ENCODE measurements at regions of chr2 and their contacts with region 1.

Region 1: GRCh38 chr2:7773362-7774360 is 856.4 kb downstream of the RNF144A start:
- DNase-seq: peak; percentile 26
- H3K4me3 Mint-ChIP-seq: peak overlapping the region; percentile 31
- H3K27ac Mint-ChIP-seq: peak overlapping the region; percentile 91
- H3K4me1 Mint-ChIP-seq: peaks cover 58% of the 10 kb centered on the region
- H3K27me3 Mint-ChIP-seq: no peaks in the 10 kb centered on the region

Region 2: GRCh38 chr2:7450188-7450832 is 323.4 kb before region 1 on chr2:
- intact Hi-C with region 1: loop called (anchors 1 kb)
- DNase-seq: peak; percentile 59
- H3K4me3 Mint-ChIP-seq: peak overlapping the region; percentile 26
- H3K27ac Mint-ChIP-seq: peak overlapping the region; percentile 99
- H3K4me1 Mint-ChIP-seq: peaks cover 85% of the 10 kb centered on the region
- H3K27me3 Mint-ChIP-seq: no peaks in the 10 kb centered on the region

Region 3: DNA sequence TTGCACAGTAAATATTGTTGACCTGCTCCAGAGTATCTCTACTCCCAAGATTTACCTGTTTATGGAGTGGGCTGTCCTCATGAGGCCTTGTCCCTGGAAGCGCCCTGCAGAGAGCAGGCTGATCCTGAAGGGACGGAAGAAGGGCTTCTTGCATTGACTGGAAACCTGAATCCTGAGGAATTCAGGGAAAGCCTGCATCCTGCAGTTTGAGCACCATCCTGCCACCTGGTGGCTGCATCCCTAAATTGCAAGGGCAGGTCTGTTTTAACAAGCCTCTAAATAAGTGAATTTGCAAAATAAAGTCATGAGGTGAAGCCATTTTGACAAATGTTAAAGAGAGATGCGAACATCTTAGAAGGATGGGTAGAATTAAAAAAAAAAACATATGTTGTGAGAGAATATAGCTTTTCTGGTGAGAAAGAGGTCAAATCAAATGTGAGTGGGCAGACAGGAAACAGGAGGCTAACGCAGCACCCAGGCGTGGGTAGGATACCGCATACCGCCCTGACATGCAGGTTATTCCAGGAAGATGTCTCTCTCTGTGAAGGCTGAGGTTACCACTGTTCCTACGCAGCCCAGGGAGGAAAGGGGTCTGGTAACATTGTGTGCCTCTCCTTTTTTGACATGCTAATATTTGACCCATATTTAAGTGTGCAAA is 101.5 kb before region 1 on chr2:
- intact Hi-C with region 1: loop called (anchors 2 kb)
- DNase-seq: peak; percentile 51
- H3K4me3 Mint-ChIP-seq: peak overlapping the region; percentile 63
- H3K27ac Mint-ChIP-seq: peak overlapping the region; percentile 97
- H3K4me1 Mint-ChIP-seq: peaks cover 60% of the 10 kb centered on the region
- H3K27me3 Mint-ChIP-seq: no peaks in the 10 kb centered on the region

Region 4: GRCh38 chr2:7736646-7737305 is 36.9 kb before region 1 on chr2:
- intact Hi-C with region 1: no loop called
- DNase-seq: no peak
- H3K4me3 Mint-ChIP-seq: no peak overlapping the region
- H3K27ac Mint-ChIP-seq: peak overlapping the region; percentile 36
- H3K4me1 Mint-ChIP-seq: peaks cover 27% of the 10 kb centered on the region
- H3K27me3 Mint-ChIP-seq: no peaks in the 10 kb centered on the region

Region 5: DNA sequence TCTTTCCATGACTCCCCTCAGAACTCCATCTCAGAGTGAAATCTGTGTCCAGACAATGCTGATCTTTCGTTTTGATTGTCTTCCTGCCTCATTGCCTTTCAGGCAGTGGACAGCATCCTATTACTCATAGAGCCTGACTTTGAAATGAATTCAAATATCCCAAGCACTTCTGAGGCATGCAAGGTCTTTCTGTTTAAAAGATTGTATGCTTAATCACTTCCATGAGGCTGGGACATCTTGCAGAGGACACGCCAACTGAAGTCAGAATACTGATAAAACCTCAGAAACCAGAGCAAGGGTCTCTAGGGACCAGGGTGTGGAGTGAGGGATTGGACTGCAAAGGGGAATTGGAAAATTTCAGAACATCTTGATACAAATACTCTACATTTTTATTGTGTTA is 71.7 kb after region 1 on chr2:
- intact Hi-C with region 1: loop called (anchors 1 kb)
- DNase-seq: no peak
- H3K4me3 Mint-ChIP-seq: no peak overlapping the region
- H3K27ac Mint-ChIP-seq: peak overlapping the region; percentile 81
- H3K4me1 Mint-ChIP-seq: peaks cover 64% of the 10 kb centered on the region
- H3K27me3 Mint-ChIP-seq: no peaks in the 10 kb centered on the region

Region 6: DNA sequence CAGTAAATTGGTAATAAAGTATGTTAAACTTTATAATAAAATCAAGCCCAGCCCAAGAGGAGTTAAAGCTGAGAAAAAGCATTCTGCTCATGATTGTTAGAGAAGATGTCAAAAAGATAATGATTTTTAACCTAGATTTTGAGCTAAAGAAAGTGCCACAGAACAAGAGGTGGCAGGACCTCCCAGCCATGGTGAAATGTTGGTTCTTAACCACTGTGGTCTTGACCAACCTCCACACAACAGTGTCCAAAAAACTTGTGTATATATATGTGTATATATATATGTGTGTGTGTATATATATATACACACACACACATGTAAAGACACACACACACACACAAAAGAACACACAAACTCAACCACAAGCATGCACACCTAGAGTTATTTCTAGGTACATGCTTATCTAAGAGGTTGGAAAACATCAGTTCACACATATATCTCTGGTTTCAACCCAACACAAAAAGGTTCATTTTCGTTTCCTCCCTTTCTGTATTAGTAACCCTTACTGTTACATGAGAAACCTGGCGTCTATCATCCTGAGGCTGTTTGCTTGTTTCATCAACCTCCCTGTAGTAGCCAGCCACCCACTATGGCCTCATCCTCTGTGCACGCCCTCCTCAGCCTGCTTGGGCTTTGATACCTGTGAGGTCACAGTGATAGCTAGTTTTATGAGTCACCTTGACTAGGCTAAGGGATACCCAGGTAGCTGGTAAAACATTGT is 276.4 kb after region 1 on chr2:
- intact Hi-C with region 1: loop called (anchors 2 kb)
- DNase-seq: peak; percentile 63
- H3K4me3 Mint-ChIP-seq: peak overlapping the region; percentile 30
- H3K27ac Mint-ChIP-seq: peak overlapping the region; percentile 86
- H3K4me1 Mint-ChIP-seq: peaks cover 53% of the 10 kb centered on the region
- H3K27me3 Mint-ChIP-seq: no peaks in the 10 kb centered on the region

Region 7: DNA sequence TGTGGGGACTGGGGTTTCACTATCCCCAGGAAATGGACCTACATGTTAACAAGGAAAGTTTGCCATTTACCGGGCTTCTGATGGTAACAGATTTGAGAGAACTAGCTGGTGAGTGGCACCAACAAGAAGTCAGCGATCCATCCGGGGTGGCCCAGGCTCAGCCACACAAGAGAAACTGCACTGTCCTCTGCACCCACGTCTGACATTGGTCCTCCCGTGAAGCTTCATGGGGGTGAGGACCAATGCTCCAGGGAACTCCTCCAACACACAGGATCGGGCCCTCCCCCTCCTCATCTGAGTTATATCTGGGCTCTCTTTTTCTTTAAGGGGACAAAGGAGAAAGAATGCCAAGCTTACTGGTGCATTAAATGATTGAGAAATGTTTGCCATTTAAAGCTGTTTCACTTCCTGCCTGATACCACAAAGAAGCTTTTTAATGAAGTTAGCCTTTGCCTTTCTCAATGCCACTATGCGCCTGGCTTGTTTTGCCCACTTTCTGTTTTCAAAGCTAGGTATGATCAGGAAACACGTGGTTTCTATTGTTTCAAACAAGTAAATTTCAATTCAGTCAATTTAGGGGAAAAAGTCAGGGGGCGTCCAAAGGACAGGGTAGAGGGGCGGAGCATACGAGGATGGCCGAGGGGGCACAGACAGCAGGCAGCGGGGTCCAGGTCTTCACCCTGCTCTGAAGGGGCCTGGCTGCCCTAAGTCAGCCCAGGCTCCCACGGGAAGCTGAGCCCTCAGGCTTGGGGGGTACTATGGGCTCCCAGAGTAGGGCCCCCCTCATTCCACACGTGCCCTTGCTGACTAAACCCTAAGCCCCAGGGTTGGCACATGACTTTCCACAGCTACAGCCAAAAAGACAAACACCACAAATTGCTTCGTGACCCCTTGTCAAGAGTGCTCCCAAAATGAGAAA is 704.1 kb after region 1 on chr2:
- intact Hi-C with region 1: loop called (anchors 5 kb)
- DNase-seq: no peak
- H3K4me3 Mint-ChIP-seq: peak overlapping the region; percentile 5
- H3K27ac Mint-ChIP-seq: peak overlapping the region; percentile 72
- H3K4me1 Mint-ChIP-seq: peaks cover 79% of the 10 kb centered on the region
- H3K27me3 Mint-ChIP-seq: no peaks in the 10 kb centered on the region